Calu3 (cell line): ENCODE measurements at regions of chr5 and their contacts with region 1.

Region 1: DNA sequence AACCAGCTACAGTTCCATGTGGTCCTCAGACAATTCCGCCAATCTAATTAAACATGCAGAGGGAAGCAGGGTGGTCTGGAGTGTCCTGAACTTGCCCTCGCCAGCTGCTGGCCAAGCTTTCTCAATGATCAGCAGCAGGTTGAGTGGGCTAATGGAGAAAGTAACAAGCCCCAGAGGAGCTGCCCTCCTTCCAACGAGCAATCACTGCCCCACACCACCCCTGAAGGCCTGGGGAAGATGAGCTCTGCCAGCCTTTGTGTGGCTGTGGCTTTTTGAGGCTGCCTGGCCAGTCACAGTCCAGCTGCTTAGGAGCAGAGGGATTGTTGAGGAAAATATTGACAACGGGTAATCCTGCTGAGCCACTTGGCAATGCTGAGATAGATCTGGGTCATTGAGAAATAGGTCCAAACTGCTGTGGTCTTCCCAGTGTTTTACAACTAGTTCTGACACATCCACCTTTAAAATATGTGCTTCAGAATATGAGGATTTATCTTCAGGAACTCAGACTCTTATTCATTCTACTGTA is 107.3 kb downstream of the CD180 start:
- DNase-seq: no peak
- H3K4me3 Mint-ChIP-seq: no peak overlapping the region
- H3K27ac Mint-ChIP-seq: no peak overlapping the region
- H3K4me1 Mint-ChIP-seq: peaks cover 25% of the 10 kb centered on the region
- H3K27me3 Mint-ChIP-seq: no peaks in the 10 kb centered on the region
- CTCF ChIP-seq: no peak

Region 2: GRCh38 chr5:65721720-65722574 is 1367.3 kb before region 1 on chr5 and contains the starts of genes NLN and SGTB:
- CTCF ChIA-PET with region 1: no interaction called
- intact Hi-C with region 1: no loop called
- DNase-seq: peak; percentile 89
- H3K4me3 Mint-ChIP-seq: peak within 1 kb of the TSS; percentile 90
- H3K27ac Mint-ChIP-seq: peak within 1 kb of the TSS; percentile 83
- H3K4me1 Mint-ChIP-seq: no peaks in the 10 kb centered on the region
- H3K27me3 Mint-ChIP-seq: no peaks in the 10 kb centered on the region
- CTCF ChIP-seq: no peak
- total RNA-seq, gene NLN: 47.9 and 48.0 TPM in 2 replicates
- total RNA-seq, gene SGTB: 3.9 and 6.8 TPM in 2 replicates

Region 3: DNA sequence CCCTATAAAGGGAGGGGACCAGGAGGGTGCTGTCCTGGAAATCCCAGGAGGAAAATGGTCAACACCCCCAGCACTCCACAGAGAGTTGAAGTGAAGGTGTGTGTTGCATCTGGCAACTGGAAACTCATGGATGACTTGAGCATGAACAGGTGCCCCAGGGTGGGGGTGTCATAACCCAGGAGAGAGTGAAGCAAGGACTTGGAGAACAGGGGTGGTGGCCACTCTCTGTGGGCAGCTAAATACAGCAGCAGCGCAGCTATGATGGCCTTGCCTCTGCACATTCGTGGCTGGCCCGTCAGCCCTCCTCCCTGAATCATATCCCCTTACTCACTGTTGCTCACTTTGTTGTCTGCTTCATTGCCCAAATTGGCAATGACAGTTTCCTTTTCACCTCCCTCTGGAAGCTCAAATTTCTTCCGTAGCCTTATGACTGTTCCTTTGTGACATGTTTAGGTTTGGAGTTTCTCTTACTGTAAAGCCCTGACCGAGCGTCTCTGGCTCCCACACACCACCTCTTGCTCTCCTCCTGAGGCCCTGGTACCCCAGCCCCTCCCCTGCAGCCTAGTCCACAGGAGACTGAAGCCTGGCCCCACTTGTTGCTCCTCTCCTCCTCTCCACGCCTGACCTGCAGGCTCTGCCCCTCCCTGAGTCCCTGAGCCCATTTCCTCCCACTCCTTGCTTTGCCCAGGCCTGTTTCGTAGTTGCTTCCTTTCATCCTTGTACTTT is 78.4 kb before region 1 on chr5:
- CTCF ChIA-PET with region 1: no interaction called
- intact Hi-C with region 1: loop called (anchors 5 kb)
- DNase-seq: no peak
- H3K4me3 Mint-ChIP-seq: no peak overlapping the region
- H3K27ac Mint-ChIP-seq: peak overlapping the region; percentile 43
- H3K4me1 Mint-ChIP-seq: peaks cover 48% of the 10 kb centered on the region
- H3K27me3 Mint-ChIP-seq: no peaks in the 10 kb centered on the region
- CTCF ChIP-seq: no peak

Region 4: DNA sequence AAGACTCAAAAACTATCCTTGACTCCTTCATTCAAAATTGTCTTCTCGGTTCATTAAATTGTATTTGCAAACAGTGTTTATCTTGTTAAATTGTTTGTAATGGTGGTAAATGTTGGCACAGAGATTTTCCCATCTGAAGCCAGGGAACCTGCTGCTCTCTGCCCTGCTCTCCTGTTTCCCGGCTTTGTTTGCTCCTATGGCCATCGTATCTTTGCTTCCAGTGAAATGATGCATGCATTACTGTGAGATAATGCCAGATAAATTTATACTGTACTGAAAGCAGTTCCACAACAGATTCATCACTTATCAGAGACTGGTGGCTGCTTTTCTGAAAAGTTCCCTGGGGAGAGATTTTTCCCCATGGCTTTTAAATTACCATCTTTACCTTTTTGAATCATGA is 26.0 kb after region 1 on chr5:
- CTCF ChIA-PET with region 1: no interaction called
- intact Hi-C with region 1: loop called (anchors 1 kb)
- DNase-seq: no peak
- H3K4me3 Mint-ChIP-seq: no peak overlapping the region
- H3K27ac Mint-ChIP-seq: no peak overlapping the region
- H3K4me1 Mint-ChIP-seq: no peaks in the 10 kb centered on the region
- H3K27me3 Mint-ChIP-seq: no peaks in the 10 kb centered on the region
- CTCF ChIP-seq: no peak